Sciatic nerve (tissue), 2 donors: ENCODE measurements at regions of chr14 and their contacts with region 1.

Region 1: GRCh38 chr14:94136575-94137331 is 7.3 kb upstream of the IFI27L2 start:
- DNase-seq: peak; percentile 95
- ATAC-seq: peak; percentile 94

Region 2: DNA sequence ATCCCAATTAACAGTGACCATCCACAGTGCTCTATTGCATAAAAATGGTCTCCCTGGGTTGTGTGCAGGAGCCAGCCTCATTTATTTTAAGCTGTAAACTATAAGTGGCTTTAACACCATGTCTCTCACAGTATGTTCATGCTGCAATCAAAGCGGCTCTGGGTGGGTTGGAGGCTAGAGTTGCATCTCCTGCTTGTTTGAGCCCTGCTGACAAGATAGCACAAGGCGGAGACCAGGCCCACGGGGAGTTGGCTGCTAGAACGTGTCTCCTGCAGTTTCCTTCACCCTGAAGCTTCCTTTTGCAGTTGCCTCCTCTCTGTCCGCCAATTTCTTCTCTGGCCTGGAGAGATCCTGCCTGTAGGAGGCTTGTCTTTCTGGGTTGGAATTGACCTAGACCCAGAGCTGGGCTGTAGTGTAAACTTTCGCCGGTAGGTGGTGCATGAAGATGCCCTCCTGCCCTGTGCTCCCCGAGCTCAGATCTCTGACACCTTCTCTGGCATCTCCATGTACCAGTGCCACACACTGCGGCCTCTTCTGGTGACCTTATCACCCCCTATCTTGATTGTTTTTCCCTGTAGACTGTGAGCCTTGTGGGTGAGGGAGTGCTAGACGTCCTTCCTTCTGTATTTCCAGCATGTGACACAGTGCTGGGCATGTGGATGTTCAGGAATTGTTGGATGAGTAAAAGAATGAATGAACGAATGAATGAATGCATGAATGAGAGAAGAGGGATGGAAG is 100.3 kb before region 1 on chr14:
- intact Hi-C with region 1: loop called (anchors 10 kb)
- DNase-seq: peak; percentile 84
- ATAC-seq: peak; percentile 88

Region 3: GRCh38 chr14:94345337-94346064 is 208.7 kb after region 1 on chr14:
- intact Hi-C with region 1: no loop called
- DNase-seq: no peak
- ATAC-seq: peak; percentile 51